ENCODE measurements at regions of chr2 and their contacts with region 1.

Region 1: GRCh38 chr2:106147159-106147558 is 46.9 kb downstream of the UXS1 start:
- DNase-seq: no peak
- H3K4me3 Mint-ChIP-seq: peak overlapping the region; percentile 10
- H3K27ac Mint-ChIP-seq: peak overlapping the region; percentile 76
- H3K4me1 Mint-ChIP-seq: peaks cover 56% of the 10 kb centered on the region
- H3K27me3 Mint-ChIP-seq: no peaks in the 10 kb centered on the region

Region 2: GRCh38 chr2:106160786-106161261 is 13.7 kb after region 1 on chr2:
- CTCF ChIA-PET with region 1: interaction called, 21 read pairs
- POLR2A ChIA-PET with region 1: interaction called, 5 read pairs
- DNase-seq: peak; percentile 47
- H3K4me3 Mint-ChIP-seq: peak overlapping the region; percentile 86
- H3K27ac Mint-ChIP-seq: peak overlapping the region; percentile 97
- H3K4me1 Mint-ChIP-seq: peaks cover 86% of the 10 kb centered on the region
- H3K27me3 Mint-ChIP-seq: no peaks in the 10 kb centered on the region